Posterior vena cava (tissue), 2 donors: ENCODE measurements at regions of chrX and their contacts with region 1.

Region 1: GRCh38 chrX:18126971-18127370 is 93.7 kb downstream of the BEND2 start:
- DNase-seq: no peak

Region 2: GRCh38 chrX:18098763-18099162 is 28.2 kb before region 1 on chrX:
- intact Hi-C with region 1: loop called in 1 of 2 experiments (anchors 1 kb)
- DNase-seq: no peak

Region 3: DNA sequence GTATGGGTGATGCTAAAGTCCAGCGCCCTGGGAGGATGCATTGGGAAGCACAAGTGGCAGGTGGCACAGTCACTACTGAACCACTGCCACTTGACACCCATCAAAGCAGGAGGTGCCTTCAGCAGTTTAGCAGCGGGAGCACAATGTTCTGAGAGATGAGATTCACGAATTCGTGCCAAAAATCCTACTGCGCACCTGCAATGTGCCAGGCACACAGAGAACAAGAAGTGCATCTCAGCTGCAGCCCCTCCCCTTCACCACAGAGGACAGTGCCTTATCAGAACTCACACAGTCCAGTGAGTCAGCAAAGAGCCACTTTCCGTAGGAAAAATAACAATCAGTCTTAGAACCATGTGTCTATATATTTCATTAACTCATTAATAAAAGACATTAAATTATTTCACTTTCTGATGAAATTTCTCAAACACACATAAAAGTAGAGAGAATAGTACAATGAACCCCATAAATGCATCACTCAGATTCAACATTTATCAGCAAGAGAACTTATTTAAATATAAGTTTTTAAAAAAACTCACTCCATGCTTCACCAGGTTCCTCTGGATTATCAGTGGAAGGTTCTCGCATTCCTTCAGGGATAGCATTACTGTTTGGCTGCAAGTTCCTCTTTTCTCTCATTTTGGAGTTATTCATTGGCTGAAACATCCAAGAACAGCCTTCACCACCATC is 46.7 kb after region 1 on chrX:
- intact Hi-C with region 1: no loop called
- DNase-seq: no peak